ENCODE measurements at regions of chr18 and their contacts with region 1.

Region 1: DNA sequence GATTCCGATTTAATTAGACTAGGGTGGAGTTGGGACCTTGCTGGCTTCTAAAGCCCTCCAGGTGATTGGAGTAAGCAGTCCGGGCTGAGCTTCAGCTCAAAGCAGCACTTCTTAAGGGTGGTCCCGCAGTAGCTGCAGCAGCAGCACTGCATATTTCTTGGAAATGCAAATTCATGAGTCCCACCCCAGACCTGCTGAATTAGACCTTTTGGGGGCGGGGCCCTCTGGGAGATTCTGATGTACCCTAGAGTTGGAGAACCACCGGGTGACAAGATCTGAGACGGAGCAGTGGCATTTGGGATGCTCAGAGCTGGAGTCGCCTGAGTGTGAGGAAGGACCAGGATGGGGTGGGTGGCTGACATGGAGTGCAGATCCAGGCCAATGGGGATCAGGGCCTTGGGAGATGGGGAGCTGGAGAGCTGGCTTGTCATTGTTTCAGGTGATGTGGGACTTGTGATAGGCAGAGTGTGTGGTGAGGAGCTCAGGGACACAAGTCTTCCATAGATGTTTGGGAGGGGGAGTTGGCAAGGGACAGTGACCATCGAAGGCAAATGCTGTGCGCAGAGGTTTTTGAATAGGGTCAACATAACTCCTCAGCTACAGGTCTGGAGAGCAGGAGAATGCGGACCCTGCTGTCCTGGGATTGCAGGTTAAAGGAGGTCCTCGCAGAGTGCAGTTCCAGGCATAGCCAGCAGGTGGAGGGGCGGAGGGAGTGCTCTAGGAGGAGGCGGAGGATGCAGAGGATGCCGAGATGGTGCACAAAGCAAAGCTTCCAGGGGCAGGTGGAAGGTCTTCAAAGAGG is 130.9 kb upstream of the RAB12 start:
- DNase-seq: peak; percentile 76 to 84
- H3K4me3 ChIP-seq: no peak overlapping the region
- H3K4me3 Mint-ChIP-seq: no peak overlapping the region
- H3K27ac Mint-ChIP-seq: no peak overlapping the region
- H3K4me1 ChIP-seq: no peaks in the 10 kb centered on the region
- H3K4me1 Mint-ChIP-seq: no peaks in the 10 kb centered on the region
- H3K27me3 ChIP-seq: no peaks in the 10 kb centered on the region
- H3K27me3 Mint-ChIP-seq: peaks cover 22% of the 10 kb centered on the region
- CTCF ChIP-seq: peak; percentile 86 to 93

Region 2: DNA sequence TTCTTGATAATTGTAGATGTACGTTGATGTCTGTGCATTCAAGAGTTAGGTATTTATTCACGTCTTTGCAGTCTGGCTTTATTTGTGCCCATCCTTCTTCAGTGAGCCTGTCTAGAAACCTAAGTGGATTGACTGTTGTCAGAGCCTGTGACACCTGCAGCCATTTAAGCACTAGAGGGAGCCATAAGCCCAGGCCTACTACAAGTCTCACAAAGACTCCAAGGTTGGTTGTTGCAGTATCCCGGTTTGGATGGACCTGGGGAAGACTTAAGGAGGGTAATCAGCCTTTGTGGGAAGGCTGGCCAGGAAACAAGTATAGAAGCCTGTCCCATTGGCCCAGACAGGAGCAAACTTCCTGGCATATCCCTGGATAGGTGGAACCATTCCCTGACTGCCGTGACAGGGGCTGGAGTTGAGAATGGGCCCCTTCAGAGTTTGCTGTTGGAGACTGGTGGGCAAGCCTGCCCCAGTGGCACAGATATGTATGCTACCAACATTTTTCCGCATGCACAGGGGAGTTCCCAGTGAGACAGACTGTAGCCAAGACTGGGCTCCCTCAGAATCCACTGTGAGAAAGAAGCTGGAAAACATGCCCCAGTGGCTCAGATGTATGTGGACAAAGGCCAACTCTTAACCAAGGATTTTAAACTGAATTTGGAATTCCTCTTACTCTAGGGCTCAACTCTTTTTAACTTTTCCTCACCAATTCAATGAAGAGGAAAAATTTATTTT is 1256.8 kb before region 1 on chr18:
- CTCF ChIA-PET with region 1: no interaction called
- POLR2A ChIA-PET with region 1: no interaction called
- intact Hi-C with region 1: loop called (anchors 1 kb)
- DNase-seq: peak; percentile 75 to 77
- H3K4me3 ChIP-seq: no peak overlapping the region
- H3K4me3 Mint-ChIP-seq: no peak overlapping the region
- H3K27ac Mint-ChIP-seq: no peak overlapping the region
- H3K4me1 ChIP-seq: no peaks in the 10 kb centered on the region
- H3K4me1 Mint-ChIP-seq: no peaks in the 10 kb centered on the region
- H3K27me3 ChIP-seq: no peaks in the 10 kb centered on the region
- H3K27me3 Mint-ChIP-seq: peaks cover 6% of the 10 kb centered on the region
- CTCF ChIP-seq: peak; percentile 65 to 84

Region 3: GRCh38 chr18:8084160-8084559 is 394.2 kb before region 1 on chr18:
- CTCF ChIA-PET with region 1: no interaction called
- POLR2A ChIA-PET with region 1: no interaction called
- intact Hi-C with region 1: loop called (anchors 1 kb)
- DNase-seq: peak; percentile 51 to 64
- H3K4me3 ChIP-seq: no peak overlapping the region
- H3K4me3 Mint-ChIP-seq: no peak overlapping the region
- H3K27ac Mint-ChIP-seq: no peak overlapping the region
- H3K4me1 ChIP-seq: 0 out of 2 replicates have a peak, but pooled peaks cover 4% of the 10 kb centered on the region
- H3K4me1 Mint-ChIP-seq: no peaks in the 10 kb centered on the region
- H3K27me3 ChIP-seq: no peaks in the 10 kb centered on the region
- H3K27me3 Mint-ChIP-seq: no peaks in the 10 kb centered on the region
- CTCF ChIP-seq: peak; percentile 45 to 81

Region 4: DNA sequence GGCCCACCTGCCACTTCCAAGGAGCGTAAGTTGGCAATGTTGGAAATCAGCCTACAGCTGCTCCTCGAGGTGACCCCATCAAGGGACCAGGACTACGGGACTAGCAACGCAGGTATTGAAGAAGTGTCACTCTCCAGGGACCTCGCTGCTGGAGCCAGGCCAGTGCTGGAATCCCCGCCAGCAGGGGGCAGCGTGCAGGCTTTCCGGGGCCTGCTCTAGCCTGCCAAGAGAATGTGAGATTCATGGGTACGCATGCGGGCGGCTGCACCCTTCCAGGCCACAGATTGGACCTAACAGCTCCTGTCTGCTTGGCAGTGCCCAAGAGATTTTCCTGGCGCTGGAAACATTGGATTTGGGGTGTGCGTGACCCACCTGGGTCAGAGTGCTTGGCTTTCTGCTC is 52.0 kb before region 1 on chr18:
- CTCF ChIA-PET with region 1: interaction called, 3 read pairs
- POLR2A ChIA-PET with region 1: no interaction called
- intact Hi-C with region 1: loop called (anchors 5 kb)
- DNase-seq: peak in 1 of 2 experiments; percentile 53
- H3K4me3 ChIP-seq: no peak overlapping the region
- H3K4me3 Mint-ChIP-seq: no peak overlapping the region
- H3K27ac Mint-ChIP-seq: no peak overlapping the region
- H3K4me1 ChIP-seq: no peaks in the 10 kb centered on the region
- H3K4me1 Mint-ChIP-seq: no peaks in the 10 kb centered on the region
- H3K27me3 ChIP-seq: no peaks in the 10 kb centered on the region
- H3K27me3 Mint-ChIP-seq: no peaks in the 10 kb centered on the region
- CTCF ChIP-seq: peak; percentile 45 to 52

Region 5: DNA sequence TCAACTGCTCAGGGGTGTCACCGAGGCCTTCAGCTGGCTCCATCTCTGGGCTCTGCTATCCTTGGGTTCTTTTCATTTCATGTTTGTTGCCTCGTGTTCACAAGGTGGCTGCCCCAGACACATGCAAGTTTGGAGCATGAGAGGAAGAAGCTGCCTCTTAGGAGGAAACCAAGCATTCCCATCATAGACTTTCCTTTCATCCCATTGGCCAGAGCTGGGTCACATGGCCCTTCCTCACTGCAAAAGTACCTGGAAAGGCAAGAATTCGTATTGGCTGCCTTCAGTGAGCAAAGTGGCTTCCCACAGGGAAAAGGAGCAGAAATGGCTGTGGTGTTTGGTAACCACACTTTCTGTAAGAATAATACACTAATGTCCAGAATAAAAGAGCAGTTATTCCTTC is 24.8 kb before region 1 on chr18:
- CTCF ChIA-PET with region 1: no interaction called
- POLR2A ChIA-PET with region 1: no interaction called
- intact Hi-C with region 1: no loop called
- DNase-seq: no peak
- H3K4me3 ChIP-seq: no peak overlapping the region
- H3K4me3 Mint-ChIP-seq: no peak overlapping the region
- H3K27ac Mint-ChIP-seq: no peak overlapping the region
- H3K4me1 ChIP-seq: no peaks in the 10 kb centered on the region
- H3K4me1 Mint-ChIP-seq: no peaks in the 10 kb centered on the region
- H3K27me3 ChIP-seq: no peaks in the 10 kb centered on the region
- H3K27me3 Mint-ChIP-seq: no peaks in the 10 kb centered on the region
- CTCF ChIP-seq: no peak

Region 6: GRCh38 chr18:8536226-8536625 is 57.9 kb after region 1 on chr18:
- CTCF ChIA-PET with region 1: no interaction called
- POLR2A ChIA-PET with region 1: no interaction called
- intact Hi-C with region 1: no loop called
- DNase-seq: no peak
- H3K4me3 ChIP-seq: no peak overlapping the region
- H3K4me3 Mint-ChIP-seq: no peak overlapping the region
- H3K27ac Mint-ChIP-seq: no peak overlapping the region
- H3K4me1 ChIP-seq: no peaks in the 10 kb centered on the region
- H3K4me1 Mint-ChIP-seq: no peaks in the 10 kb centered on the region
- H3K27me3 ChIP-seq: no peaks in the 10 kb centered on the region
- H3K27me3 Mint-ChIP-seq: peaks cover 8% of the 10 kb centered on the region
- CTCF ChIP-seq: no peak

Region 7: DNA sequence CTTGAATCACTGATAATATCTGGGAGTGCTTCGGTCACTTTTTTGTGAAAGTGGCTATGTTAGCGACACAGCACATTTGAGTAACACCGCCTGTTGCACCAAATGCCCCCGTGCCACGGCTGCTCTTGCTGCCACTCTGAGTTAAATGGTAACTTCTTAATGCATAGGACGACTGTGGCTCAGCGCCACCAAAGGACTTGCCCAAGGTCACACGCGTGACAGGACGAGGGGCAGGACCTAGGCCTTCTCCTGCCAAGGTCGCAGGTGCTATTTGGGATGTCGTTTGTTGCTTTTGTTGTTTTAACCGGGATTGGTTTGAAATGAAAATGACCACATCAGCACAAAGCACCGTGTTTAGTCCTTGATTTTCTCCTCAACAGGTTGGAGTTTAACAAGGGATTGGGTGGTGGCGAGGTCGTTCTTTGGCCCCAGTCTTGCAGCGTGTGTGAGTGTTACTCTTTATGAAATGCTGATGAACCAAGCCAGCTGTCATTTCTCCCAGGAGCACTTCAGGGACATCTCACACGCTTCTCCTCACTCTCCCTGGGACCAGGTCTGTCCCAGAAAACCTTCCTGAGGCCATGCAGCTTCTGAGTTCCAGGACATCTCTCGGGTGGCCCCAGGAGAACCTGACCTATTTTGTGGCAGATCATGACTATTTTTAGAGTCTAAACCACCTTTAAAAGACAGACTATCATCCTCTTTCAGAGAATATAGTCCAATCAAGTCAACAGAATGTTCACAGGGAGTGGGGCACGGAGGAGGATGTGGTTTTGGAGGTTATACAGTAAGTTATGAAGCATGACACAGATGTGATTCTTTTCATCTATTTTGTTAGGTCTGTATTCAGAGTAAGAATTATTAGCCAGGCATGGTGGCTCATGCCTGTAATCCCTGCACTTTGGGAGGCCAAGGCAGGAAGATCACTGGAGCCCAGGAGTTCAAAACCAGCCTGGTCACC is 276.9 kb after region 1 on chr18:
- CTCF ChIA-PET with region 1: no interaction called
- POLR2A ChIA-PET with region 1: no interaction called
- intact Hi-C with region 1: no loop called
- DNase-seq: no peak
- H3K4me3 ChIP-seq: no peak overlapping the region
- H3K4me3 Mint-ChIP-seq: no peak overlapping the region
- H3K27ac Mint-ChIP-seq: no peak overlapping the region
- H3K4me1 ChIP-seq: no peaks in the 10 kb centered on the region
- H3K4me1 Mint-ChIP-seq: no peaks in the 10 kb centered on the region
- H3K27me3 ChIP-seq: no peaks in the 10 kb centered on the region
- H3K27me3 Mint-ChIP-seq: no peaks in the 10 kb centered on the region
- CTCF ChIP-seq: no peak

Region 8: GRCh38 chr18:8988261-8988871 is 510.0 kb after region 1 on chr18:
- CTCF ChIA-PET with region 1: interaction called, 5 read pairs
- POLR2A ChIA-PET with region 1: no interaction called
- intact Hi-C with region 1: loop called (anchors 2 kb)
- DNase-seq: peak; percentile 64 to 70
- H3K4me3 ChIP-seq: no peak overlapping the region
- H3K4me3 Mint-ChIP-seq: no peak overlapping the region
- H3K27ac Mint-ChIP-seq: no peak overlapping the region
- H3K4me1 ChIP-seq: no peaks in the 10 kb centered on the region
- H3K4me1 Mint-ChIP-seq: no peaks in the 10 kb centered on the region
- H3K27me3 ChIP-seq: no peaks in the 10 kb centered on the region
- H3K27me3 Mint-ChIP-seq: no peaks in the 10 kb centered on the region
- CTCF ChIP-seq: peak; percentile 90 to 91

Measured in Caco-2 (cell line).